ENCODE measurements at regions of chr6 and their contacts with region 1.

Region 1: DNA sequence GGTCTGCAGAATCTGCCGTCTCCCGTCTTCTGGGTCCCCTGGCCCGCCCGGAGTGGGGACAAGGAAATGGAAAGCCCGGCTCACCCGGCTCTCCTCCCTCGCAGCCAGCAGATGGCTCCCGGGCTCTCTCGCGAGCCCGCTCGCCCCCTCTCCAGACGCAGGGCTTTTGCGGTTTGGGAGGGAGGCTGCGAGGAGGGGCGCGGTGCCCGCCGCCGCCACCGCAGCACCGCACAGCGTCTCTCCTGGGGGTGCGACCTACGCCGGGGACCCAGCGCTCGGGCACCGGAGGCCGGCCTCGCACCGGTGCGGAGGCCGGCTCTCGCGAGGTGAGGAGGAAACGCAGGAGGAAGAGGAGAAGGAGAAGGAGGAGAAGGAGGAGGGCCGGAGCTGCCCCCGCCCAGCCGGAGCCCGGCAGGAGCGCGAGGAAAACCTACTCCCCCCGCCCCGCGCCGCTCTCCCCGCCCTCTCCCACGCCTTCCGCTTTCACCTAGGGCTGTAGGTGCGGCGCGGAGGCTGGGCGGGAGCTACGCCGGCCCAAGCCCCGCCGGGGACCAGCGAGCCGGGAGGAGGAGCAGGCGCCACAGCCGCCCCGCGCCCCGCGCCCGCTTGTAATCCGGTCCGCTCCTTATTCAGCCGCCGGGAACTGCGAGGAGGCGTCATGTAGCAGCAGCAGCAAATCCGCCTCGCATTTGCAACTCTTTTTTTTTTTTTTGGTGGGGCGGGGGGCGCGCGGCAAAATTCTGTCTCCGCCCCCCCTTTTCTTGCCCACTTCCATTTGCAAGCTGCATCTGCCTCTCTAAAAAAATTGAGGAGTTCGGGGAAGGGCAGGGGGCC is at the start of gene CARMIL1:
- DNase-seq: peak; percentile 46 to 76 (median 70)
- ATAC-seq: peak; percentile 84
- H3K4me3 ChIP-seq: peak within 1 kb of the TSS; percentile 64
- H3K4me3 Mint-ChIP-seq: peak within 1 kb of the TSS; percentile 88 to 98 (median 94)
- H3K27ac ChIP-seq: peak within 1 kb of the TSS; percentile 77
- H3K27ac Mint-ChIP-seq: peak within 1 kb of the TSS; percentile 74 to 94 (median 90)
- H3K4me1 ChIP-seq: peaks cover 14 to 15% of the 10 kb centered on the region in 2 donors
- H3K4me1 Mint-ChIP-seq: peaks cover 19 to 62% (median 41%) of the 10 kb centered on the region in 7 donors
- H3K27me3 ChIP-seq: no peaks in the 10 kb centered on the region
- H3K27me3 Mint-ChIP-seq: peaks cover 0 to 16% (median 6%) of the 10 kb centered on the region in 5 donors
- total RNA-seq, gene CARMIL1: 3.3 to 12.8 (median 10.4) TPM

Region 2: GRCh38 chr6:25172819-25173218 is 106.3 kb before region 1 on chr6:
- CTCF ChIA-PET with region 1: no interaction called
- POLR2A ChIA-PET with region 1: no interaction called
- intact Hi-C with region 1: no loop called
- DNase-seq: no peak
- ATAC-seq: no peak
- H3K4me3 ChIP-seq: no peak overlapping the region
- H3K4me3 Mint-ChIP-seq: peak overlapping the region in 1 of 10 donors; percentile 2
- H3K27ac ChIP-seq: no peak overlapping the region
- H3K27ac Mint-ChIP-seq: peak overlapping the region in 1 of 9 donors; percentile 10
- H3K4me1 ChIP-seq: no peaks in the 10 kb centered on the region
- H3K4me1 Mint-ChIP-seq: peaks cover 0 to 85% (median 5%) of the 10 kb centered on the region in 7 donors
- H3K27me3 ChIP-seq: no peaks in the 10 kb centered on the region
- H3K27me3 Mint-ChIP-seq: peaks cover 0 to 6% (median 0%) of the 10 kb centered on the region in 5 donors

Region 3: GRCh38 chr6:25263657-25264056 is 15.5 kb before region 1 on chr6:
- CTCF ChIA-PET with region 1: interaction called, 25 read pairs
- POLR2A ChIA-PET with region 1: interaction called, 5 read pairs
- intact Hi-C with region 1: loop called in 1 of 2 experiments (anchors 1 kb)
- DNase-seq: no peak
- ATAC-seq: no peak
- H3K4me3 ChIP-seq: no peak overlapping the region
- H3K4me3 Mint-ChIP-seq: no peak overlapping the region
- H3K27ac ChIP-seq: no peak overlapping the region
- H3K27ac Mint-ChIP-seq: no peak overlapping the region
- H3K4me1 ChIP-seq: no peaks in the 10 kb centered on the region
- H3K4me1 Mint-ChIP-seq: peaks cover 0 to 4% (median 3%) of the 10 kb centered on the region in 7 donors
- H3K27me3 ChIP-seq: no peaks in the 10 kb centered on the region
- H3K27me3 Mint-ChIP-seq: peaks cover 0 to 25% (median 3%) of the 10 kb centered on the region in 5 donors

Region 4: DNA sequence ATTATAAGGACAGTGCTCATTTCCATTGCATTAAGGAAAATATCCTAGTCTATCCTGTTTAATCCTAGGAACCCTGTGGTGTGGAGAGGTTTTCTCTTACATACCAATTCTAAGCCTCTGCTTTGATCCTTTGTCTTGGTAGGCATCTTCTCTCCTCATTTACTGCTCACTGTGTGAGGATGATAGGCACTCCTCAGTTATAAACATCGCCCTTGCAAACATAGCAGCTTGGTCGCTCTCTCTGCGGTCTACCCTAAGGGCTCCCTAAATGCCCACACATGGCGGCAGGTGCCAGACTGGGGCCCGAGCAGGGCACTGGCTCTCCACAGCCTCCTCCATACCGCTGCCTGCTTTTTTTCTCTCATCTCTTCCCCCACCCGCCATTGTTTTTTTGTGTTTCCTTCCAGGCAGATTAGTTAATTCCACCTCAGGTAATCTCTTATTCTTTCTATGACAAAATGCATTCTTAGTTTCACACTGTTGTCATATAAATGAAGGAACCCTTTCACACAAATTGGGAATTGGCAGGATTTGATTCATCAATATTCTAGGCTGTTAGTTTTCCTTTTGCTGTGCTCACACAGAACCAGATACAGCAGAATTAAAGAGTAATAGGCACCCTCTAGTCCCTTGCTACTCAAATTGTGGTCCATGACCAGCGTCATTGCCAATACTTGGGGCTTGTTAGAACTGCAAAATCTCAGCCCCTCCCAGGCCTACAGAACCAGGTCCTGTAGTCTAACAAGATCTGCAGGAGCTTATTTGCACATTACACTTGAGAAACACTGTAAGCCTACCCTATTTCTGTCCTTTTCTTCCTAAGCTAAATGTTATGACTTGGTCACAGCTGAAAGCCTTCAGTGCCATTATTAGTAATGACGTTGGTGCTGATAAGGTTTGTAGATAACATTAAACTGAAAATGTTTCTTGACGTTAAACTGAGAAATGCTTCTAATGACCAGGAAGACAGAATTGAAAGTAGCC is 36.4 kb after region 1 on chr6:
- CTCF ChIA-PET with region 1: no interaction called
- POLR2A ChIA-PET with region 1: no interaction called
- intact Hi-C with region 1: loop called in 1 of 2 experiments (anchors 5 kb)
- DNase-seq: no peak
- ATAC-seq: no peak
- H3K4me3 ChIP-seq: no peak overlapping the region
- H3K4me3 Mint-ChIP-seq: no peak overlapping the region
- H3K27ac ChIP-seq: no peak overlapping the region
- H3K27ac Mint-ChIP-seq: peak overlapping the region in 1 of 9 donors; percentile 46
- H3K4me1 ChIP-seq: peaks cover 0 to 7% of the 10 kb centered on the region in 2 donors
- H3K4me1 Mint-ChIP-seq: peaks cover 12 to 73% (median 49%) of the 10 kb centered on the region in 7 donors
- H3K27me3 ChIP-seq: no peaks in the 10 kb centered on the region
- H3K27me3 Mint-ChIP-seq: peaks cover 0 to 3% (median 0%) of the 10 kb centered on the region in 5 donors

Region 5: GRCh38 chr6:25369433-25370181 is 90.5 kb after region 1 on chr6:
- CTCF ChIA-PET with region 1: interaction called, 11 read pairs
- POLR2A ChIA-PET with region 1: interaction called, 12 read pairs
- intact Hi-C with region 1: loop called (anchors 1 kb)
- DNase-seq: peak in 8 of 9 donors; percentile 34 to 67 (median 50)
- ATAC-seq: peak; percentile 52
- H3K4me3 ChIP-seq: peak overlapping the region; percentile 14
- H3K4me3 Mint-ChIP-seq: peak overlapping the region; percentile 79 to 97 (median 91)
- H3K27ac ChIP-seq: peak overlapping the region; percentile 80
- H3K27ac Mint-ChIP-seq: peak overlapping the region; percentile 82 to 100 (median 99)
- H3K4me1 ChIP-seq: peaks cover 18 to 46% of the 10 kb centered on the region in 2 donors
- H3K4me1 Mint-ChIP-seq: peaks cover 43 to 100% (median 96%) of the 10 kb centered on the region in 7 donors
- H3K27me3 ChIP-seq: no peaks in the 10 kb centered on the region
- H3K27me3 Mint-ChIP-seq: no peaks in the 10 kb centered on the region

Region 6: DNA sequence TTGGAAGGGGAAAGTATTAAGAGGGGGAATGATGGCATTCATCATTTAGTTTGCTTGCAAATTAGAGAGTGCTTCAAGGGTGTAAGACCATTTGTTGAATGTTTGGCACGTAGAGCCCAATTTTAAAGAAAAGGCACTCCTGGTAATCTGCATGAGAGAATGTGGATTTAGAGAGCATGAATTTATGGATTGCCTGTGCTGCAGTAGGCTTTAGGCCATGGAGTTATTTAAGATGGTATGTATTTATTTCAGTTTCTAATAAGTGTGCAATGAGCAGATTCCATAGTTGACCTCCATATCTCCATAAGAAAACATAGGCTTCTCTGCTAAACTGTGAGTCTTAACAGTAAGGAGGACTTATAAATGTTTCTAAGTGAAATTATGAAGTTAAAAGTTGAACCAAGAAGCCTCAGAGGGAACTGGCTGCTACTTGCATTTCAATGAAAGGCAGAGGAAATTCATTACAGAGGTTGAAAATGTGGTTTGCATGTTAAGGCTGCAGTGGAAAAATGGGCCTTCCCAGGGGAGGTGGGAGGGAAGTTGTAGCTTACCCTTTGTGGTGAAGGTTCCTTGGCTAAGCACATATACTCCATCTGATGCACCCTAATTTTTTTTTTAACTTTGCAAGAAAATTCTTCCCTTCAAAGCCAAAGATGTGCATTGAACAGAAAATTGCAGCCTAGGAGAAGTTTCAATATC is 134.2 kb after region 1 on chr6:
- CTCF ChIA-PET with region 1: no interaction called
- POLR2A ChIA-PET with region 1: interaction called, 3 read pairs
- intact Hi-C with region 1: loop called (anchors 2 to 5 kb)
- DNase-seq: peak in 1 of 9 donors; percentile 11
- ATAC-seq: no peak
- H3K4me3 ChIP-seq: no peak overlapping the region
- H3K4me3 Mint-ChIP-seq: peak overlapping the region in 9 of 10 donors; percentile 5 to 83 (median 54)
- H3K27ac ChIP-seq: no peak overlapping the region
- H3K27ac Mint-ChIP-seq: peak overlapping the region in 6 of 9 donors; percentile 12 to 77 (median 46)
- H3K4me1 ChIP-seq: peaks cover 0 to 26% of the 10 kb centered on the region in 2 donors
- H3K4me1 Mint-ChIP-seq: peaks cover 26 to 92% (median 72%) of the 10 kb centered on the region in 7 donors
- H3K27me3 ChIP-seq: no peaks in the 10 kb centered on the region
- H3K27me3 Mint-ChIP-seq: peaks cover 0 to 3% (median 0%) of the 10 kb centered on the region in 5 donors